GM12878 (cell line): ENCODE measurements at regions of chr7 and their contacts with region 1.

Region 1: GRCh38 chr7:122689346-122690109 is 9.4 kb downstream of the RNF133 start:
- DNase-seq: no peak
- ATAC-seq: peak; percentile 55
- H3K4me3 ChIP-seq: no peak overlapping the region
- H3K27ac ChIP-seq: no peak overlapping the region
- H3K4me1 ChIP-seq: no peaks in the 10 kb centered on the region
- H3K27me3 ChIP-seq: no peaks in the 10 kb centered on the region
- CTCF ChIP-seq: peak in 1 of 3 experiments; percentile 1; a peak in 1 of 6 replicates
- EP300 ChIP-seq: no peak
- POLR2A ChIP-seq: no peak
- RAD21 ChIP-seq: no peak

Region 2: GRCh38 chr7:122550545-122550944 is 139.0 kb before region 1 on chr7:
- CTCF ChIA-PET with region 1: interaction called, 3 read pairs
- POLR2A ChIA-PET with region 1: no interaction called
- RAD21 ChIA-PET with region 1: interaction called, 4 read pairs
- SMC1A ChIA-PET with region 1: interaction called, 10 read pairs
- in situ Hi-C with region 1: no loop called
- intact Hi-C with region 1: no loop called
- DNase-seq: no peak
- ATAC-seq: peak; percentile 68
- H3K4me3 ChIP-seq: no peak overlapping the region
- H3K27ac ChIP-seq: no peak overlapping the region
- H3K4me1 ChIP-seq: no peaks in the 10 kb centered on the region
- H3K27me3 ChIP-seq: no peaks in the 10 kb centered on the region; a peak in 1 of 4 replicates
- CTCF ChIP-seq: peak in 2 of 3 experiments; percentile 23 to 60; a peak in 2 of 6 replicates
- EP300 ChIP-seq: no peak
- POLR2A ChIP-seq: no peak
- RAD21 ChIP-seq: no peak

Region 3: DNA sequence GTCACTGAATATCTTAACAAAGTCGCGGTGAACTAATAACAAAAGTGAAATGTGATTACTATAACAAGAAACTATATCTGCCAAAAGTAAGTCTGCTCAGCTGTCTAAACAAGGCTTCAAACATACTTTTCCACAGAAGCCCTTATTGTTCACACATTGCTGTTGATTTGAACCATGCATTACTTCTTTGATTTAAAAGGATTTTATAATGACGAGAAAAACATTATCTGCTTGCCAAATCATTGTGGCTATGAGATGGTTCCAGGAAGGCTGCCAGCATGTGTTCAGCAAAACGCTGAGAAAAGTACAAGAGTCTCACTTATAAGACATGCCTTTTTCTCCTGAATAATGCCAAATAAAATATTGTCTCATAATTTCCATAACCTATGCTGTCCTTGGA is 15.0 kb before region 1 on chr7:
- CTCF ChIA-PET with region 1: interaction called, 6 read pairs
- POLR2A ChIA-PET with region 1: no interaction called
- RAD21 ChIA-PET with region 1: interaction called, 3 read pairs
- SMC1A ChIA-PET with region 1: interaction called, 17 read pairs
- in situ Hi-C with region 1: no loop called
- intact Hi-C with region 1: no loop called
- DNase-seq: no peak
- ATAC-seq: no peak
- H3K4me3 ChIP-seq: no peak overlapping the region
- H3K27ac ChIP-seq: no peak overlapping the region
- H3K4me1 ChIP-seq: no peaks in the 10 kb centered on the region
- H3K27me3 ChIP-seq: no peaks in the 10 kb centered on the region
- CTCF ChIP-seq: no peak
- EP300 ChIP-seq: no peak
- POLR2A ChIP-seq: no peak
- RAD21 ChIP-seq: no peak

Region 4: GRCh38 chr7:122702872-122703510 is 13.5 kb after region 1 on chr7 and contains the start of gene RNF148:
- CTCF ChIA-PET with region 1: interaction called, 11 read pairs
- POLR2A ChIA-PET with region 1: no interaction called
- RAD21 ChIA-PET with region 1: interaction called, 7 read pairs
- SMC1A ChIA-PET with region 1: interaction called, 10 read pairs
- in situ Hi-C with region 1: no loop called
- intact Hi-C with region 1: no loop called
- DNase-seq: no peak
- ATAC-seq: no peak
- H3K4me3 ChIP-seq: no peak within 1 kb of the TSS
- H3K27ac ChIP-seq: no peak within 1 kb of the TSS
- H3K4me1 ChIP-seq: no peaks in the 10 kb centered on the region
- H3K27me3 ChIP-seq: no peaks in the 10 kb centered on the region
- CTCF ChIP-seq: no peak
- EP300 ChIP-seq: no peak
- POLR2A ChIP-seq: no peak
- RAD21 ChIP-seq: no peak
- polyA plus RNA-seq, gene RNF148: not detected

Region 5: DNA sequence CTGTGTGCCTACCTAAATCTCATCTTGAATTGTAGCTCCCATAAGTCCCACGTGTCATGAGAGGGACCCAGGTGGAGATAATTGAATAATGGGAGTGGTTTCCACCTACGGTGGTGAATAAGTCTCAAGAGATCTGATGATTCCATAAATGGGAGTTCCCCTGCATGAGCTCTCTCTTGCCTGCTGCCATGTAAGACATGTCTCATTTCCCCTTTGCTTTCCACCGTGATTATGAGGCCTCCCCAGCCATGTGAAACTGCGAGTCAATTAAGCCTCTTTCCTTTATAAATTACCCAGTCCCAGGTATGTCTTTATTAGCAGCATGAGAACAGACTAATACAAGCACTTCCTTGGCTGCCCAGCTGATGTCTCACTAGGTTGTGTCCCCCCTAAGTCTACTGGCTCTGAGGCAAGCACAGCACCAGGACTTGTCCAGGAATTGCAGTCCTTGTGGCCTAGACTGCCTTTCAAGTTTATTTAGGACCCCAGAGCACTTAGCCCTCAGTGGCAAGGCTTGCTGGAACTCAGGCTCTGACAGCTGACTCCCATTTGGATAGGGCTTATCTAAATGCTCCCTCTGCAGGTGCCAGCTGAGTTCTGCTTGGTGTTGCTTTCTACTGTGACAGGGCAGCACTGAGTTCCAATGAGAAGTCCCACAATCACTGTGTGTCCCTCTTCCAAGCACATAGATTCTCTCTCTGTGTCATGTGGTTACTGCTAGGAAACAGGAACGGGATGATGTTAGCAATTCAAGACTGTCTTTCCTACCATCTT is 365.0 kb after region 1 on chr7:
- CTCF ChIA-PET with region 1: interaction called, 4 read pairs
- POLR2A ChIA-PET with region 1: interaction called, 3 read pairs
- RAD21 ChIA-PET with region 1: no interaction called
- SMC1A ChIA-PET with region 1: no interaction called
- in situ Hi-C with region 1: no loop called
- intact Hi-C with region 1: loop called (anchors 10 kb)
- DNase-seq: no peak
- ATAC-seq: peak; percentile 84
- H3K4me3 ChIP-seq: no peak overlapping the region
- H3K27ac ChIP-seq: no peak overlapping the region
- H3K4me1 ChIP-seq: no peaks in the 10 kb centered on the region
- H3K27me3 ChIP-seq: no peaks in the 10 kb centered on the region
- CTCF ChIP-seq: no peak
- EP300 ChIP-seq: no peak
- POLR2A ChIP-seq: no peak
- RAD21 ChIP-seq: no peak